BJ (cell line): ENCODE measurements at regions of chr19 and their contacts with region 1.

Region 1: DNA sequence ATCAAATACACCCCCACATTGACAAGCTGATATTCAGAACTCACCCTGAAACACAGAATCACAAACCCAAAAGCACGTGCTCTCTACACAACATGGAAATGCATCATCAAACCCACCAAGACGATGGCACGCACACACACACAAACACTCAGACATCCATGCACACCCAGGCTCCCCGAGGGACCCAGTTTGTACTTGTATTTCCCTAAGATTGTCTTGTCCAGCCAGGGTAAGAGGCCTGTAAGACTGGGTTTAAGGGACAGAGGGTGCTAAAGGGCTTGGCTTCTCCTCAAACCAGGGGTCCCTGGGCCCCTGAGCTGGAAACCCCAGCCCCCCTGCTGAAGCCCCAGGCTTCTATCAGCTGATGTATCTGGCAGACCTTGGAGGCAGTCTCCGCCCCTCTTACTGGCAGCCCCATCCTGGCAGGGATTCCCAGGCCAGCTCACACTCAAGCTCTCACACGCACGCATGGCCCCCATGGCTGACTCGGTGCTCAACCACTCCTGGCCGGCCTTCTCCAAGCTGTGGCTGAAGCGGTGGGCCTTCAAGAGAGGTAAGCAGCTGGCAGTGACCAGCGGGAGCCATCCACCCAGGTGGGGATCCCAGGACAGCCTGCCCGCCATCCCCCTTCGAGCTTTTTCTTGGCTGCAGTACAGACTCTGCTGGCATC is 6.5 kb downstream of the ARHGEF18 start:
- DNase-seq: no peak
- H3K4me3 ChIP-seq: no peak overlapping the region
- H3K27me3 ChIP-seq: no peaks in the 10 kb centered on the region
- CTCF ChIP-seq: no peak

Region 2: GRCh38 chr19:7250951-7251893 is 104.1 kb before region 1 on chr19:
- CTCF ChIA-PET with region 1: no interaction called
- POLR2A ChIA-PET with region 1: no interaction called
- DNase-seq: no peak
- H3K4me3 ChIP-seq: no peak overlapping the region
- H3K27me3 ChIP-seq: no peaks in the 10 kb centered on the region
- CTCF ChIP-seq: no peak

Region 3: GRCh38 chr19:7340959-7341837 is 14.1 kb before region 1 on chr19:
- CTCF ChIA-PET with region 1: interaction called, 30 read pairs
- POLR2A ChIA-PET with region 1: no interaction called
- DNase-seq: peak; percentile 7
- H3K4me3 ChIP-seq: no peak overlapping the region
- H3K27me3 ChIP-seq: no peaks in the 10 kb centered on the region; the same call in none of the 2 replicates
- CTCF ChIP-seq: peak; percentile 92

Region 4: GRCh38 chr19:7381073-7381390 is 25.7 kb after region 1 on chr19:
- CTCF ChIA-PET with region 1: interaction called, 36 read pairs
- POLR2A ChIA-PET with region 1: no interaction called
- DNase-seq: no peak
- H3K4me3 ChIP-seq: no peak overlapping the region
- H3K27me3 ChIP-seq: no peaks in the 10 kb centered on the region; the same call in 1 of the 2 replicates
- CTCF ChIP-seq: no peak

Region 5: DNA sequence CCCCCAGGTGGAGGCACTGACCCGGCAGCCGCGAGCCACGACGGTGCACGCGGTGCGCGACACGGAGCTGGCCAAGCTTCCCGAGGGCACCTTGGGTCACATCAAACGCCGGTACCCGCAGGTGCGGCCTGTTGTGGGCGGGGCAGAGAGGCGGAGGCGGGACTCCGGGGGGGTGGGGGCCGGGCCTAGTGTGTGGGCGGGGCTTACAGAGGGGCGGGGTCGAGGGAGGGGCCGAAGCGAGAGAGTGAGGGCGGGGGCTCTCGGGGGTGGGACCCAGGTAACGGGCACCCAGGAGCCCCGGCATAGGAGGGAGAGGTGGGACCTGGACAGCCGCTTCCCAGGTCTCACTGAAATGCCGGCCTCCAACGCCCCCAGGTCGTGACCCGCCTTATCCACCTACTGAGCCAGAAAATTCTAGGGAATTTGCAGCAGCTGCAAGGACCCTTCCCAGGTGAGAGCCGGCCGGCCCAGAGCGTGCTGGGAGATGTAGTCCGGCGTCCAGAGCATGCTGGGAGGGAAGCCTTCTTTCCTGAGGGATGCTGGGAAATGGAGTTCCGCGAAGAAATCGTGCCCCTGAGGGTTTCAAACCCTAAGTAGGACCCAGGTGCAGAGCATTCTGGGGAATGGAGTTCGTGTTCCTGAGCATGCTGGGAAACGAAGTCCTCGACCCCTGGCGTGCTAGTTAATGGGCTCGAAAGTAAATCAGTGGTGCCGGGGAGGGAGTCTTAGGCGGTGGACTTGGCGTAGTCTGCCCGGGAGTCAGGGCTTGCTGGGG is 195.9 kb after region 1 on chr19:
- CTCF ChIA-PET with region 1: no interaction called
- POLR2A ChIA-PET with region 1: interaction called, 13 read pairs
- DNase-seq: no peak
- H3K4me3 ChIP-seq: no peak overlapping the region
- H3K27me3 ChIP-seq: no peaks in the 10 kb centered on the region
- CTCF ChIP-seq: no peak

Region 6: DNA sequence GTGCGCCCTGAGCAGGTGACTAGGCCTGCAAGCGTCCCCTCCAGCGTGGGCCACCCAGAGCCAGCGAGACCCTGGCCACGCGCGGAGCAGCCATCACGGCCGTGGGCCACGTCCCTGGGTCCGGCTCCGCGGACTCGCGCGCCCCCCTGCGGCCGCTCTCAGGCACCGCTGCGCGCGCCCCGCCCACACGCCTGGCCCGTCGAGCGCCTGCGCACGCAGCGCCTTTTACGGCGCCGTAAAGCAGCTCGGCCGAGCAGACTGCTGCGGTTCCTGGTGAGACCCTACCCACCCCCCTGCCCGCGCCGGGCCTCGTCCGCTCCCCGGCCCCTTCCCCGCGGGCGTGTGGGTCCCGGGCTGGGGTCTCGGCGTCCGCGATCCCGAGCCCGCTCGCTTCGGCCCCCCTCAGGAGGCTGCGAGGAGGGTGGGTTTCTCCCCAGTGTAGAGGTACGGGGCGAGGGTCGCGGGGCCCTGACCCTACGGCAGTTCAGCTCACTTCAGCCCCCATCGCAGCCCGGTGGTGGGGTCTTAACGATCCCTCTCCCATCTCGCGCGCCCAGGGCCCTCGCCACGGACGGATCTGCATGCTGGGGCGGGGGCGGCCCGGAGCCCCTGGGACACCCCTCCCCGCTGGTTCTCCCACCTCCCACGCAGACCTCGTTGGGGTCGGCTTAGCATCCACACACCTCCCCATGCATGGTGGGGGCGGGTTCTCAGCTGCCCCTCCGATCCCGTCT is 325.5 kb after region 1 on chr19 and contains the start of gene TRAPPC5:
- CTCF ChIA-PET with region 1: interaction called, 24 read pairs
- POLR2A ChIA-PET with region 1: no interaction called
- DNase-seq: no peak
- H3K4me3 ChIP-seq: peak within 1 kb of the TSS; percentile 100
- H3K27me3 ChIP-seq: no peaks in the 10 kb centered on the region; the same call in 1 of the 2 replicates
- CTCF ChIP-seq: peak; percentile 37; the same call in 1 of the 2 replicates
- polyA plus RNA-seq, gene TRAPPC5: 59.7 and 85.1 TPM in 2 replicates